ENCODE measurements at regions of chr6 and their contacts with region 1.

Region 1: DNA sequence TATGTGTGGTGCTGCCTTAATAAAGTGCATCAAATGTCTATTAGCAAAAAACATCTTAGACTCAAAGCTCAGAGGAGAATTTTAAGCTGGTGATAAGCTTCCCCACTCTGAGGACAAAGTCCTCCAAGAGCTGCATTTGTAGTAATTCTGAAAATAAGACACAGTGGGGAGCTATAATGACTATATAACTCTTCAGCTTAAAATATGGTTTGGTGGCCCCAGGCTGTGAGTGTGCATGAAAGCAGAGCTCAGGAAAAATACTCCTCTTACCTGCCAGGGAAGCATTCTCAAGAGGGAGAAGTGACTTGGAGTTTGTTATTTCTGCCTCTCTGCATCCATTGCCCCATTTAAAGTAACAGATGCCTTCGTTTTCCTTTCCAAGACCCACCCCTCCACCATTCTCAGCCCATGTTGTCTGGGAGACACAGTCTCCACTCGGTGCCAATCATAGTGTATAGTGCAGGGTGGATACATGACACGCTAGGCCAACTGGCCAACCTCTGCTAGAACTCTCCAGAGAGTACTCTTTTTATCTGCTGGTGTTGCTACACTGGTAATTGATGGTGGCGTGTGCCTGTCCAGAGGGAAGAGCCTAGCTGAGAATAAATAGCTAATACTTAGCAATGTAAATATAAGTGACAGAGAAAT is 229.2 kb downstream of the PHF3 start:
- DNase-seq: no peak
- ATAC-seq: no peak
- H3K4me3 ChIP-seq: no peak overlapping the region
- H3K27ac ChIP-seq: no peak overlapping the region
- H3K4me1 ChIP-seq: peaks cover 15% of the 10 kb centered on the region
- H3K27me3 ChIP-seq: no peaks in the 10 kb centered on the region
- CTCF ChIP-seq: no peak

Region 2: DNA sequence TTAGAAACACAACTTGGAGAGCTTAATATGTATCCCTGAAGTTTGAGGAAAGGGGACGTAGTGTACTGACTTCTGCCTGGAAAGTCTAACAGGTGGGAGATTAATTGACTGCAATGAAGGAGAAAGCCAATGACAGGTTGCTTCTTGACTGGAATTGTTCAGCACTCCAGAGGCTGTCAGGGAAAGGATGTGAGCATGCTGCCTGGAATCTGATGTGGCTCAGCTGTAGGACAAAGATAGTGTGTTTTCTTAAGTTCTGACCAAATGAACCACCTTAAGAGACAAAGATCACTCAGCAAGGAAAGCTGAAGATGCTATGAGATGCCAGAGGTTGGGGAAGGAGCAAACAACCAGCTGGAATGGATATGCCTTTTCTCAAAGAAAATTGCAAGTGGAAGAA is 43.4 kb before region 1 on chr6:
- CTCF ChIA-PET with region 1: no interaction called
- POLR2A ChIA-PET with region 1: interaction called, 12 read pairs
- intact Hi-C with region 1: no loop called
- DNase-seq: no peak
- ATAC-seq: no peak
- H3K4me3 ChIP-seq: no peak overlapping the region
- H3K27ac ChIP-seq: no peak overlapping the region
- H3K4me1 ChIP-seq: no peaks in the 10 kb centered on the region
- H3K27me3 ChIP-seq: no peaks in the 10 kb centered on the region
- CTCF ChIP-seq: no peak

Region 3: DNA sequence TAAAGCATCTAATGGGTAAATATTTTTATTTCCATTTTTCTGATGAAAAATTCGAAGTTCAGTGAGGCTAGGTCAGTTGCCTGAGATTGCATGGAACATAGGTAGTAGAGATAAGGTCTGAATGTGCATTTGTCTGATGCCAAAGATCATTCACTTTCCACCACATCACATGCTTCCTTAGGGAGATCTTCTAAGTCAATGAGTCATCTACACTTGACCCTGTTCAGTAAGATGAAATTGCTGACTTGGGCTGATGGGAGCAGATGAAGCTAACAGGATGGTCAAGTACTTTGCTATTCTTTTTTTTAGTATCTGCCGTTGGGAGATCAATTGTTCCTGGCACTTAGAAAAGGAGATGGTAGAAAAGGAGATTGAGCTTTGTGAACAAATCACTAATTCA is 282.1 kb after region 1 on chr6:
- CTCF ChIA-PET with region 1: no interaction called
- POLR2A ChIA-PET with region 1: no interaction called
- intact Hi-C with region 1: no loop called
- DNase-seq: no peak
- ATAC-seq: no peak
- H3K4me3 ChIP-seq: no peak overlapping the region
- H3K27ac ChIP-seq: no peak overlapping the region
- H3K4me1 ChIP-seq: no peaks in the 10 kb centered on the region; the same call in 1 of the 2 replicates
- H3K27me3 ChIP-seq: no peaks in the 10 kb centered on the region
- CTCF ChIP-seq: no peak

Region 4: GRCh38 chr6:64175296-64175695 is 310.5 kb after region 1 on chr6:
- CTCF ChIA-PET with region 1: no interaction called
- POLR2A ChIA-PET with region 1: no interaction called
- intact Hi-C with region 1: no loop called
- DNase-seq: no peak
- ATAC-seq: no peak
- H3K4me3 ChIP-seq: no peak overlapping the region
- H3K27ac ChIP-seq: no peak overlapping the region
- H3K4me1 ChIP-seq: no peaks in the 10 kb centered on the region
- H3K27me3 ChIP-seq: no peaks in the 10 kb centered on the region
- CTCF ChIP-seq: no peak

Measured in PC-3 (cell line).